Activated CD4-positive, alpha-beta T cell treated with anti-CD3 and anti-CD28 coated beads, Interleukin-2, amount 10 ng/mL, durations not matched to agents 24 days and 14 days (primary cell): ENCODE measurements at regions of chr10 and their contacts with region 1.

Region 1: GRCh38 chr10:178208-178607 is 43.0 kb downstream of the ZMYND11 start:
- DNase-seq: no peak
- H3K4me3 Mint-ChIP-seq: no peak overlapping the region
- H3K27ac Mint-ChIP-seq: no peak overlapping the region
- H3K4me1 Mint-ChIP-seq: peaks cover 12% of the 10 kb centered on the region
- H3K27me3 Mint-ChIP-seq: no peaks in the 10 kb centered on the region

Region 2: GRCh38 chr10:135132-135600 is 43.0 kb before region 1 on chr10 and contains the start of gene ZMYND11:
- intact Hi-C with region 1: loop called (anchors 5 kb)
- DNase-seq: peak; percentile 88
- H3K4me3 Mint-ChIP-seq: peak within 1 kb of the TSS; percentile 93
- H3K27ac Mint-ChIP-seq: peak within 1 kb of the TSS; percentile 95
- H3K4me1 Mint-ChIP-seq: peaks cover 22% of the 10 kb centered on the region
- H3K27me3 Mint-ChIP-seq: peaks cover 12% of the 10 kb centered on the region
- total RNA-seq, gene ZMYND11: 29.4 and 31.0 TPM in 2 replicates

Region 3: DNA sequence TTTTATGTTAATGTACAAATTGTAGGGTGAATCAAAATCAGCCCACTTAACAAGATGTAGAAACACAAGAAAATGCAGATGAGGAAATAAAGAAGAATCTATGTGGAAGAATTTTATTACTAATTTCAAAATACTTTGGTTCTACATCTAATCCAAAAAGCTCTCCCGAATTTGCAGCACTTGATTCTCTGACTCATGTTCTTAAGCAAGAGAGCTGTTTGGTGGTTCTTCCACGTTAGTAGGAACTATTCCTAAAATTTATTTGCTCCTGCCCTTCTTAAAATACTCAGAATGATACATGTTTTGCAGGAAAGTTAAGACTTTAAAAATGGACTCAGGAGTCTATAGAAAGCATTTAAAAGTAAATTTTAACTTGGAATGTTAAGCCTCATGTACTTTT is 48.8 kb after region 1 on chr10:
- intact Hi-C with region 1: loop called (anchors 5 kb)
- DNase-seq: no peak
- H3K4me3 Mint-ChIP-seq: no peak overlapping the region
- H3K27ac Mint-ChIP-seq: no peak overlapping the region
- H3K4me1 Mint-ChIP-seq: peaks cover 8% of the 10 kb centered on the region
- H3K27me3 Mint-ChIP-seq: no peaks in the 10 kb centered on the region

Region 4: GRCh38 chr10:404346-404745 is 226.1 kb after region 1 on chr10:
- intact Hi-C with region 1: no loop called
- DNase-seq: no peak
- H3K4me3 Mint-ChIP-seq: no peak overlapping the region
- H3K27ac Mint-ChIP-seq: no peak overlapping the region
- H3K4me1 Mint-ChIP-seq: no peaks in the 10 kb centered on the region
- H3K27me3 Mint-ChIP-seq: peaks cover 2% of the 10 kb centered on the region

Region 5: DNA sequence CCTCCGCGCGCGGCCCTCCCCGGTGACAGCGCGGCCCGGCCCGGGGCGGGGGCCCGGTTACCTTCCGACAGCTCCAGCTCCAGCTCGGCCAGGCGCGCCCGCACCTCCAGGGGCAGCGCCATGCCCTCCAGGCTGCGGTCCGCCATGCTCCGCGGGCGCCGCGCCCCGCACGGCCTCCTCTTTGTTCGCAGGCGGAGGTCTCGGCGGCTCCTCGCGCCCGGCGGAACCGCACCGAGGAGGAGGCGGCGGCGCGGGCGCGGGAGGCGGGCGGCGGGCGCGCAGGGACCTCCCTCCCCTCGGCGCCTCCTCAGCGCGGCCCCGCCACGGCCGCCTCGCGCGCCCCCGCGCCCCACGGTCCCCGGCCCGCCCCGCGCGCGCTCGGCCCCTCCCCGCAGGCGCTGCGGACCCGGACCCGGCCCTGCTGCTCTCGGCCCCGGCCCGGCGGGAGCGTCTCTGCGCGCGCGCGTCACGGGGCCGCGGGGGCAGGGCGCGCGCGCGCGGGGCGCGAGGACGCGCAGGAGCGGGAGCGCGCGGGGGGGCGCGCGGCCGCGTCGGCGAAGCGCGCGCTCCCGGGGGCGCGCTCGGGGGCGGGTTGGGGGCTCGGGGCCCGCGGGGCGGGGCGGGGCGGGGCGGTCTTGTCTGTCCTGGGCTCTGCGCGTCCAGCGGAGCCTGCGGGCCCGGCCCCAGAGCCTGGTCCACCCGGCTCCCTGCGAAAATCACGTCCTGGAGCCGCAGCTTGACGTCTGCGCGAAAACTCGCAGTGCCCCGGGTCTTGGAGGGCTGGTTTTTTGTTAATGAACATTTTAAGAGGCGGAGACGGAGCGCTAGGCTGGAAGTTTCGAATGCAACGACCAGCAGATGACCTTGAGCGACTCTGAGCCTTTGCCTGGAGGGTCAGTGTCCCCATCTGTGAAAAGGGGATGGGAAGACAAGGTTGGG is 511.5 kb after region 1 on chr10 and contains the start of gene DIP2C:
- intact Hi-C with region 1: no loop called
- DNase-seq: no peak
- H3K4me3 Mint-ChIP-seq: peak within 1 kb of the TSS; percentile 46
- H3K27ac Mint-ChIP-seq: no peak within 1 kb of the TSS
- H3K4me1 Mint-ChIP-seq: no peaks in the 10 kb centered on the region
- H3K27me3 Mint-ChIP-seq: peaks cover 40% of the 10 kb centered on the region
- total RNA-seq, gene DIP2C: 1.4 and 1.9 TPM in 2 replicates